Activated CD8-positive, alpha-beta T cell treated with anti-CD3 and anti-CD28 coated beads for 36 hours (primary cell): ENCODE measurements at regions of chr2 and their contacts with region 1.

Region 1: GRCh38 chr2:113602869-113603466 is 24.1 kb upstream of the RABL2A start:
- DNase-seq: no peak
- ATAC-seq: no peak
- H3K4me3 Mint-ChIP-seq: peak overlapping the region; percentile 92
- H3K27ac Mint-ChIP-seq: peak overlapping the region; percentile 94
- H3K4me1 Mint-ChIP-seq: peaks cover 7% of the 10 kb centered on the region
- H3K27me3 Mint-ChIP-seq: no peaks in the 10 kb centered on the region
- CTCF ChIP-seq: no peak

Region 2: GRCh38 chr2:113692698-113693428 is 89.9 kb after region 1 on chr2:
- CTCF ChIA-PET with region 1: interaction called, 14 read pairs
- POLR2A ChIA-PET with region 1: no interaction called
- intact Hi-C with region 1: loop called (anchors 5 kb)
- DNase-seq: peak; percentile 67
- ATAC-seq: peak; percentile 80
- H3K4me3 Mint-ChIP-seq: peak overlapping the region; percentile 57
- H3K27ac Mint-ChIP-seq: peak overlapping the region; percentile 93
- H3K4me1 Mint-ChIP-seq: peaks cover 46% of the 10 kb centered on the region
- H3K27me3 Mint-ChIP-seq: no peaks in the 10 kb centered on the region
- CTCF ChIP-seq: no peak

Region 3: GRCh38 chr2:113700186-113700841 is 97.3 kb after region 1 on chr2:
- CTCF ChIA-PET with region 1: interaction called, 16 read pairs
- POLR2A ChIA-PET with region 1: interaction called, 3 read pairs
- intact Hi-C with region 1: no loop called
- DNase-seq: peak; percentile 82
- ATAC-seq: peak; percentile 91
- H3K4me3 Mint-ChIP-seq: peak overlapping the region; percentile 64
- H3K27ac Mint-ChIP-seq: peak overlapping the region; percentile 83
- H3K4me1 Mint-ChIP-seq: peaks cover 29% of the 10 kb centered on the region
- H3K27me3 Mint-ChIP-seq: no peaks in the 10 kb centered on the region
- CTCF ChIP-seq: peak; percentile 69